ENCODE measurements at regions of chr1 and their contacts with region 1.

Region 1: DNA sequence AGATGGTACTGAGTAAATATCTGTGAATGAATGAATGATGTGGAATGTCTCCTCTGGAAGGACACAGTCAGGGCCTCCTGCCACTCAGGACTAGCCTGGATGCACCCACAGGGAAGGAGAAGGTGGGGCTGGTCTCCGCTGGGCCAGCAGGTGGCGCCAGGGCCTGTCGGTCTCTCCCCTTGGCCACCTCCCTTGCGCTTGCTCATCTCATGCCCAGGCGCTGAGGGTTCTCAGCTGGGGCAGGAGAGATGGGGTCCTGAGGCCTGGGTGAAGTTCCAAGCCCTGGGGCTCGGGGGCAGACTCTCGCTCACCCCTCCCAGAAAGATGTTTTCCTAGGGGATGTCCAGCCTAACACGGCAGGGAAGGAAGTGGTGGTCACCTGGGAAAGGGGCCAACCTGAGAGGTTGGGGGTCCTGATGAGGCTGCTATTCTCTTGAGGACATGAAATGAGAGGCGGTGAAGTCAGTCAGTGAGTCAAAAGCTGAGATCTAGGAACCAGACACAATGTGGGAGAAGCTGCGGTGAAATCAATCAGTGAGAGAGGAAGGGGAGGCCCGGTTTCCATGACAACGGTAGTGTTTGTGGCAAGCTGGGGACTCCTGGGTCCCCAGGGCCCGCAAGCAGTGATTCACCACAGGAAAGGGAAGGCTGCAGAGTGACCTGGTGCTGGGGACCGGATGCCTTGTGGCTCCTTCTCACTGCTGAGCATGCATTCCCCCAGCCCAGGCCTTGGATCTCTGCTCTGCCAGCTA is 14.6 kb upstream of the MEX3A start:
- DNase-seq: peak; percentile 85
- ATAC-seq: peak; percentile 86
- H3K4me3 Mint-ChIP-seq: peak overlapping the region; percentile 0
- H3K27ac Mint-ChIP-seq: peak overlapping the region; percentile 33
- H3K4me1 Mint-ChIP-seq: peaks cover 36% of the 10 kb centered on the region
- H3K27me3 Mint-ChIP-seq: peaks cover 47% of the 10 kb centered on the region

Region 2: DNA sequence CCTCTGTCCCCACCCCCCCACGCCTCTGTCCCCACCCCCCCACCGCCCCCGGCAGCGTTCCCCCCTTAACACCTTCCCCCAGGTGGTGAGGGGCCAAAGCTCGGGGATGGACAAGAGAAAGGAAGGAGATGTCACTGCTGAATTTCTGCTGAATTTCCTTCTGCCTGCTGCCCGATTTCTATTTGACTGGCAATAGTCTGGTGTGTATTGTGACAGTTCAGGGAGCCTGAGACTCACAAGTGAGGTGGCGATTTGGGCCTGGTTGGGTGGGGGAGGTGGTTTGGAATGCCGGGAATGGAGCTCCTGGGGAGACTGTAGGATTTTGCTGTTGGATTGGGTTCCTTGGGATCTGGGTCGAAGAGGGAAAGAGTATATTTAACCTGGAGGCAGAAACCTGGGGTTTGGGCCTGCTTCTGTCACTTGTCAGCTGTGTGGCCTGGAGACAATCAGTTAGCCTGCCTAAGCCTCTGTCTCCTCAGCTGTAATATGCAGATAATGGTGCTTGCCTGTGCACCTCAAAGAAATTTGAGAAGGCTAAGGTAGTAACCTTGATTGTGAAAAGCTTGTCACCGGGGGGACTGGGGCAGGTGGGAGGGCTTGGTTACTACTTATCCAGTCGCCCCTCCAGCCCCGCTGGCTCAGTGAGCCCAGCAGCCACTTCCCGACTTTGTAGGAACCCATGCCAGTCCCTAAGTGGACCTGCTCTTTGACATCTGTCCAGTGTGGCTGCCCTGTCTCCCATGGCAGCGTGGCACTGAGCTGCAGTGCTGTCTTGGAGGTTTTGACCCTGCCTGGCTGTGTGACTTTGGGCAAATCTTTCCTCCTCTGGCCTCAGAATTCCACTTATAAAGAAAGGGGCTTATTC is 10.0 kb after region 1 on chr1:
- CTCF ChIA-PET with region 1: interaction called, 112 read pairs
- POLR2A ChIA-PET with region 1: interaction called, 5 read pairs
- DNase-seq: no peak
- ATAC-seq: no peak
- H3K4me3 Mint-ChIP-seq: peak overlapping the region; percentile 24
- H3K27ac Mint-ChIP-seq: peak overlapping the region; percentile 69
- H3K4me1 Mint-ChIP-seq: peaks cover 35% of the 10 kb centered on the region
- H3K27me3 Mint-ChIP-seq: peaks cover 29% of the 10 kb centered on the region

Region 3: DNA sequence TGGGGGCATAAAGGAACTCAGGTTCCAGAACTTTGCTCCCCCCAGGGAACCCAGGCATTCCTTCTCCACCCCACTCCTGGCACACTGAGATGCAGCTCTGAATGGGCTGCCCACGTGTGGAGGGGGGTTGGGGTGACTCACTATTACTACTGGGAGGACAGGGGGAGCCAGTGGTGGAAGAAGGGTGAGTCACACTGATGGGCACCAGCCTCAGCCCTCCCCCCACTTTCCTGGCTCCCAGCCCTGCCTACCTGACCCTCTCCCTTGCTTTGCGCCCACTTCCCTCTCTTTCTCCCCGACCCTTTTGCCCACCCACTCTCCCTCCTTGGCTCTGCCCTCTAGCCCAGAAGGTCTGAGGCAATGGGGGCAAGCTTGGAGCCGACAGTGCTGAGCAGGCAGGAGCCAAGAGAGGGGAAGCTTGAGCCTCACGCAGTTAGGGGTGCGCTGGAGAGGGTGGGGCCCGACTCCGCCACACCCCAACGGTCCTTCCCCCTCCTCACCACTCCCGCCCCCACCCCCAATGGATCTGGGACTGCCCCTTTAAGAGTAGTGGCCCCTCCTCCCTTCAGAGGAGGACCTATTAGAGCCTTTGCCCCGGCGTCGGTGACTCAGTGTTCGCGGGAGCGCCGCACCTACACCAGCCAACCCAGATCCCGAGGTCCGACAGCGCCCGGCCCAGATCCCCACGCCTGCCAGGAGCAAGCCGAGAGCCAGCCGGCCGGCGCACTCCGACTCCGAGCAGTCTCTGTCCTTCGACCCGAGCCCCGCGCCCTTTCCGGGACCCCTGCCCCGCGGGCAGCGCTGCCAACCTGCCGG is 17.5 kb after region 1 on chr1 and contains the start of gene LMNA:
- CTCF ChIA-PET with region 1: interaction called, 112 read pairs
- POLR2A ChIA-PET with region 1: interaction called, 8 read pairs
- DNase-seq: peak; percentile 70
- ATAC-seq: peak; percentile 83
- H3K4me3 Mint-ChIP-seq: peak within 1 kb of the TSS; percentile 80
- H3K27ac Mint-ChIP-seq: no peak within 1 kb of the TSS
- H3K4me1 Mint-ChIP-seq: peaks cover 26% of the 10 kb centered on the region
- H3K27me3 Mint-ChIP-seq: peaks cover 58% of the 10 kb centered on the region
- total RNA-seq, gene LMNA: 8.5 to 10.3 TPM

Region 4: DNA sequence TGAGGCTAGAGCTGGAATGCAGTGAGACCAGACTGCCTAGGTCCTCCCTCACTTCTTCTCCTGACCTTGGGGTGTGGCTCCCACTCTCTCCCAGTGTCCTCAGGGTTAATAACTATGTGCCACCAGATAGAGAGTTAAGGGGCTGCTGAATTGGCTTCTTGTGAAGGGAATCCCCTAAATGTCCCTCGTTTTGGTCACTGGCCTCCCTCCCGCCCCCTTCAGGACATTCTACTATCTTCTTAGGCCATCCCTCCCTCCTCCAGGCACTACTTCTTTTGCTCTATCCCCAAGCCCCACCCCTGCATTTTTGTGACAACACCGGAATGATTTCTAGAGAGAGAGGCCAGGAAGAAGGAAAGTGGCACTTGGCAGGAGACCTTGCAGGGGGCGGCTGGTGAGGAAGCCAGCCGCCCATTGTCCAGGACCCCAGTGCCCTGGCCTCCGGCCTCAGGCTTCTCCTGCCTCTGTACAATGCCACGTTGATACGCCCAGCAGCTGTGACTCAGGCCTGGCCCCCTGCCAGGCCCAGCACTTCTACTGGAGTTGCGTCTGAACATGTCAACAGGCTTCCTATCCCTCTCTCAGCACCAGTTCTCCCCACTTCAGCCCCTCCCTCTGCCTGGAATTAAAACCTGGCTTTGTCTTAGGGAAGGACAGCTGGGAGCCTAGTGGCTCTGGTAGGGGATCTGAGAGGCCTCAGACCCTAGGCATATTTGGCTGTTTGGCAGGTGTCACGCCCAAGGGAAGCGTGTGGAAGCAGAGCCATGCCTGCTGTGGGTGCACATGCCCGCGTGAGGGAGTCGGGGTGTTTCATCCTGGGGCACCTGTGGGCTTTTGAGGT is 26.8 kb after region 1 on chr1:
- CTCF ChIA-PET with region 1: interaction called, 534 read pairs
- POLR2A ChIA-PET with region 1: interaction called, 44 read pairs
- DNase-seq: no peak
- ATAC-seq: no peak
- H3K4me3 Mint-ChIP-seq: no peak overlapping the region
- H3K27ac Mint-ChIP-seq: peak overlapping the region; percentile 34
- H3K4me1 Mint-ChIP-seq: peaks cover 66% of the 10 kb centered on the region
- H3K27me3 Mint-ChIP-seq: peaks cover 20% of the 10 kb centered on the region

Region 5: GRCh38 chr1:156129706-156130581 is 33.1 kb after region 1 on chr1:
- CTCF ChIA-PET with region 1: interaction called, 534 read pairs
- POLR2A ChIA-PET with region 1: interaction called, 44 read pairs
- DNase-seq: peak; percentile 83
- ATAC-seq: no peak
- H3K4me3 Mint-ChIP-seq: no peak overlapping the region
- H3K27ac Mint-ChIP-seq: no peak overlapping the region
- H3K4me1 Mint-ChIP-seq: peaks cover 51% of the 10 kb centered on the region
- H3K27me3 Mint-ChIP-seq: peaks cover 7% of the 10 kb centered on the region

Region 6: GRCh38 chr1:156140879-156141252 is 44.0 kb after region 1 on chr1:
- CTCF ChIA-PET with region 1: interaction called, 10 read pairs
- POLR2A ChIA-PET with region 1: no interaction called
- DNase-seq: no peak
- ATAC-seq: no peak
- H3K4me3 Mint-ChIP-seq: no peak overlapping the region
- H3K27ac Mint-ChIP-seq: no peak overlapping the region
- H3K4me1 Mint-ChIP-seq: peaks cover 5% of the 10 kb centered on the region
- H3K27me3 Mint-ChIP-seq: no peaks in the 10 kb centered on the region